Activated CD4-positive, alpha-beta T cell treated with anti-CD3 and anti-CD28 coated beads, Interleukin-2, amount 10 ng/mL, durations not matched to agents 24 days and 14 days (primary cell): ENCODE measurements at regions of chrX and their contacts with region 1.

Region 1: DNA sequence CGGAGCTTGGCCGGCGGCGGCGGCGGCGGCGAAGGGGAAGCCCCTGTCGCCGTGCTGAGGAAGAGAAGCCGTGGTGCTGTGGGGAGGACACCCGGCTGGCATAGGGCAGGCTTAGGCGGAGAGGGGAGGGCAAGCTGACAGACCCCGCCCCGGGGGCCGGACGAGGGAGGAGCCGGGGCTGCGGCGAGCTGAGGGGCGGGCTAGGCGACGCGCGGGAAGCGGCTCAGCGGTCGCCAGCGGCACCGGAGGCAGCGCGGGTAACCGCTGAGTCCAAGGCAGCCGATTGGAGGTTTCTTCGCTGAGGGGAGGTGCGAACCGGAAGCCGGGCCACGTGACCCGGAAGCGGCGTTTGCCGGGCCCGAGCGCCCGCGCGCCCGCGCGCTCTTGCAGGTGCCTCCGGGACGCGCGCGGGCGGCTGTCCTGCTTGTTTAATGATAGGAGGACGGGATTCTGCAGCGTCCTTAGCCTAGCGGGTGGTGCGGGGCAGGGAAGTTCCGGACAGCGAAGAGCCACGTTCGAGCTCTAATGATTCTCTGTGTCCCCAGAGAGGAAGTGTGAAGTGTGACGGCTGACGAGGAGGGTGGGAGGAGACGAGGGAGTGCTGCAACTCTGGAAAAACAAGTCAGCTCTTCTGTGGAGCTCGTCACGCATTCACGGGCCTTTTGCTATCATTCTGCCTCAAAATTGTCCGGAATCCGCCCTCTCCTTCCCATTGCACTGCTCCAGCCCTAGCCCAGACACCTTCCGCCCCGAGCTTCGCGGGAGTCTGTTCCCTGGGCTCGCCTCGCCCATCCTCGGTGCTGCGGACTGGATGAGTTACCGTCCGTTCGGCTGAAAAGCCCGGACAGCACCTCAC is at the start of gene AP1S2:
- DNase-seq: peak; percentile 98
- H3K4me3 Mint-ChIP-seq: peak within 1 kb of the TSS; percentile 91
- H3K27ac Mint-ChIP-seq: peak within 1 kb of the TSS; percentile 97
- H3K4me1 Mint-ChIP-seq: peaks cover 18% of the 10 kb centered on the region
- H3K27me3 Mint-ChIP-seq: peaks cover 3% of the 10 kb centered on the region
- total RNA-seq, gene AP1S2: 24.2 and 28.8 TPM in 2 replicates

Region 2: GRCh38 chrX:15335135-15336022 is 519.6 kb before region 1 on chrX and contains the start of gene PIGA:
- intact Hi-C with region 1: loop called (anchors 10 kb)
- DNase-seq: peak; percentile 97
- H3K4me3 Mint-ChIP-seq: peak within 1 kb of the TSS; percentile 94
- H3K27ac Mint-ChIP-seq: peak within 1 kb of the TSS; percentile 94
- H3K4me1 Mint-ChIP-seq: peaks cover 9% of the 10 kb centered on the region
- H3K27me3 Mint-ChIP-seq: peaks cover 11% of the 10 kb centered on the region
- total RNA-seq, gene PIGA: 29.4 and 33.9 TPM in 2 replicates

Region 3: GRCh38 chrX:15749642-15750610 is 105.0 kb before region 1 on chrX:
- intact Hi-C with region 1: loop called (anchors 5 kb)
- DNase-seq: peak; percentile 76
- H3K4me3 Mint-ChIP-seq: peak overlapping the region; percentile 76
- H3K27ac Mint-ChIP-seq: peak overlapping the region; percentile 92
- H3K4me1 Mint-ChIP-seq: peaks cover 36% of the 10 kb centered on the region
- H3K27me3 Mint-ChIP-seq: no peaks in the 10 kb centered on the region

Region 4: GRCh38 chrX:15815779-15816437 is 39.0 kb before region 1 on chrX:
- intact Hi-C with region 1: loop called (anchors 2 kb)
- DNase-seq: peak; percentile 76
- H3K4me3 Mint-ChIP-seq: no peak overlapping the region
- H3K27ac Mint-ChIP-seq: peak overlapping the region; percentile 52
- H3K4me1 Mint-ChIP-seq: peaks cover 36% of the 10 kb centered on the region
- H3K27me3 Mint-ChIP-seq: no peaks in the 10 kb centered on the region

Region 5: DNA sequence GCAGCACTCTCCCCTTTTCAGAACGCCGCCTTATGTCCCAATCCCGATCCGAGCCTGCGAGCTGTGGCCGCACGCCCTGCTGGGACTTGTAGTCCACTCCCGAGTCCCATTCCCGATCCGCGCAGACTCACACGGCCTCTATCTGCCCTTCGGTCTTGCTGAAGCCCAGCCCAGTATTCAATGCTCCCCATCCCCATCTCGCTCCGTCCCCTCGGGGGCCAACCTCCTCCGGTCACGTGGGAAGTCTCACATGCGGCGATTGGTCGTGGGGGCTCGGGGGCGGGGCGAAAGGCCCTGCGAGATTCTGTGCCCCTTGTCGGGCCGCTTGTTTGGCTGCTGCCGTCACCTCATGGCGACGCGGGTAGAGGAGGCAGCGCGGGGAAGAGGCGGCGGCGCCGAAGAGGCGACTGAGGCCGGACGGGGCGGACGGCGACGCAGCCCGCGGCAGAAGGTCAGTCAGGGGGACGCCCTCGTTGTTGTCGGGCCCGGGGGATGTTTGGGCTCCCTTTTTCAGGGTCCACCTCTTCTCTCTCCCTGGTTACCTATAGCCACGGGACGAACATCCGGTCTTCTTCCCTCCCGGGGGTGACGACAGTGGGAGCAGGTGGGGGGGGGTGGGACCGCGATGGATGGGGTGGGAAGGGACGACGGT is 931.3 kb after region 1 on chrX and contains the start of gene TXLNG:
- intact Hi-C with region 1: loop called (anchors 10 kb)
- DNase-seq: peak; percentile 97
- H3K4me3 Mint-ChIP-seq: peak within 1 kb of the TSS; percentile 99
- H3K27ac Mint-ChIP-seq: peak within 1 kb of the TSS; percentile 96
- H3K4me1 Mint-ChIP-seq: peaks cover 11% of the 10 kb centered on the region
- H3K27me3 Mint-ChIP-seq: no peaks in the 10 kb centered on the region
- total RNA-seq, gene TXLNG: 23.4 and 24.4 TPM in 2 replicates